Dorsolateral prefrontal cortex (tissue), 120 donors: ENCODE measurements at regions of chr4 and their contacts with region 1.

Region 1: DNA sequence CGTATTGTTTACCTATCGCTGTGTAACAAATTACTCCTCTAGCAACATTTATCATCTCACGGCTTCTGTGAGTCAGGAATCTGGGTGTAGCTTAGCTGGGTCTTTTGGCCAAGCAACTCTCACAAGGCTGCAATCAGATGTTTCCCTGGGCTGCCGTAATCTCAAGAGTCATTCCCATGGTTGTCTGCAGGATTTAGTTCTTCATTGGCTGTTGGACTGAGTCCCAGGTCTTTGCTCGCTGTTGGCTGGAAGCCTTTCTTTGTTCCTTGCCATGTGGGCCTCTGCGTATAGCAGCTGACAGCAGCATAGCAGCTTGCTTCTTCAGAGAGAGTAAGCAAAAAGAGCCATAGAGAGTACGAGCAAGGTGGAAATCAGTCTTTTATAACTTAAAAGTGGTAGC is 16.8 kb downstream of the POLR2B start:
- DNase-seq: peak; percentile 52 to 82 (median 78)
- H3K4me3 ChIP-seq: peak overlapping the region in 21 of 59 donors; percentile 3 to 31 (median 17)
- H3K27ac ChIP-seq: peak overlapping the region in 53 of 59 donors; percentile 13 to 86 (median 65)
- H3K27me3 ChIP-seq: no peaks in the 10 kb centered on the region
- CTCF ChIP-seq: peak in 4 of 56 donors; percentile 8 to 19 (median 16)

Region 2: GRCh38 chr4:56977321-56978012 is 18.1 kb before region 1 on chr4 and contains the start of gene NOA1:
- intact Hi-C with region 1: loop called in 1 of 2 experiments (anchors 2 kb)
- DNase-seq: peak; percentile 92 to 98 (median 96)
- H3K4me3 ChIP-seq: peak within 1 kb of the TSS; percentile 67 to 100 (median 93)
- H3K27ac ChIP-seq: peak within 1 kb of the TSS; percentile 18 to 96 (median 88)
- H3K27me3 ChIP-seq: no peaks in the 10 kb centered on the region
- CTCF ChIP-seq: peak in 22 of 56 donors; percentile 7 to 44 (median 23)
- total RNA-seq, gene NOA1: 7.5 to 14.3 (median 11.1) TPM